ENCODE measurements at regions of chrX and their contacts with region 1.

Region 1: DNA sequence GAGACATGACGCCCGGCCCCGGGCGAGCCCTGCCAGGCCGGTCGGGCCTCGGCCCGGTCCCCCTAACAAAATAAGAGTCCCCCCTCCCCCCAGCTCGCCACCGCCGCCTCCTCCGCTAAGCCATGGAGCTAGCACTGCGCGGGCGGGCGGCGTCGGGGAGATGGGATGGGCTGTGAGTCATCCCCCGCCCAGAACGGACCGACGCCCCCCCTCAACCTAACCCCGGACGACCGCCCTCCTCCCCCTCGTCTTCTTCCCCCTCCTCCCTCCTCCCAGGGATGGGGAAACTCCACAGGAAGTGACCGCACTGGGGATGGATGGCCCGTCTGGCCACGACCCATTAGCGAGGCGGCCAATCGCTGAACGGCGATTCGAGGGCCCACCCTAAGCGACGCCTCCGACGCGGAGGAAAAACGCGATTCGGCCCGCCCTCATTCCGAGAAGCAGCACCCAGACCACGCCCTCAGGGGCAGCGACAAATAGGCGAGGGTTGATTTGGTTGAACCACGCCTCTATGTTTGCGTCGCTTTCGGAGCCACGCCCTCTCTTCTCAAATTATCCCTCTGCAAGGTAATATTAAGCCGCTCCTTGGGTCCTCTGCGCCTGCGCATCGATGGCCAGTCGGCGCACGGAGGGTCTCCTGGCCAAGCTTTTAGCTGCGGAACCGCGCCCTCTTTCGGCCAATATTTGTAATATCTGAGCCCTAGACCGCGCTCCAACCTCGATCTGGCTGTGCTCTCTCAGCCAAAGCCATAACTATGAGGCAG is at the start of gene TFE3:
- DNase-seq: peak; percentile 91 to 99 (median 96)
- H3K4me3 ChIP-seq: peak within 1 kb of the TSS in 1 of 2 donors; percentile 63
- H3K4me3 Mint-ChIP-seq: peak within 1 kb of the TSS; percentile 84 to 94 (median 89)
- H3K27ac ChIP-seq: peak within 1 kb of the TSS; percentile 93
- H3K27ac Mint-ChIP-seq: peak within 1 kb of the TSS; percentile 93 to 97 (median 96)
- H3K4me1 ChIP-seq: peaks cover 39% of the 10 kb centered on the region
- H3K4me1 Mint-ChIP-seq: peaks cover 18 to 47% (median 30%) of the 10 kb centered on the region in 4 donors
- H3K27me3 ChIP-seq: no peaks in the 10 kb centered on the region
- H3K27me3 Mint-ChIP-seq: no peaks in the 10 kb centered on the region
- total RNA-seq, gene TFE3: 35.5 to 37.6 TPM

Region 2: GRCh38 chrX:47264483-47265173 is 1778.8 kb before region 1 on chrX:
- CTCF ChIA-PET with region 1: no interaction called
- POLR2A ChIA-PET with region 1: no interaction called
- intact Hi-C with region 1: no loop called
- DNase-seq: no peak
- H3K4me3 ChIP-seq: no peak overlapping the region
- H3K4me3 Mint-ChIP-seq: no peak overlapping the region
- H3K27ac ChIP-seq: no peak overlapping the region
- H3K27ac Mint-ChIP-seq: no peak overlapping the region
- H3K4me1 ChIP-seq: no peaks in the 10 kb centered on the region
- H3K4me1 Mint-ChIP-seq: no peaks in the 10 kb centered on the region
- H3K27me3 ChIP-seq: no peaks in the 10 kb centered on the region
- H3K27me3 Mint-ChIP-seq: no peaks in the 10 kb centered on the region

Region 3: DNA sequence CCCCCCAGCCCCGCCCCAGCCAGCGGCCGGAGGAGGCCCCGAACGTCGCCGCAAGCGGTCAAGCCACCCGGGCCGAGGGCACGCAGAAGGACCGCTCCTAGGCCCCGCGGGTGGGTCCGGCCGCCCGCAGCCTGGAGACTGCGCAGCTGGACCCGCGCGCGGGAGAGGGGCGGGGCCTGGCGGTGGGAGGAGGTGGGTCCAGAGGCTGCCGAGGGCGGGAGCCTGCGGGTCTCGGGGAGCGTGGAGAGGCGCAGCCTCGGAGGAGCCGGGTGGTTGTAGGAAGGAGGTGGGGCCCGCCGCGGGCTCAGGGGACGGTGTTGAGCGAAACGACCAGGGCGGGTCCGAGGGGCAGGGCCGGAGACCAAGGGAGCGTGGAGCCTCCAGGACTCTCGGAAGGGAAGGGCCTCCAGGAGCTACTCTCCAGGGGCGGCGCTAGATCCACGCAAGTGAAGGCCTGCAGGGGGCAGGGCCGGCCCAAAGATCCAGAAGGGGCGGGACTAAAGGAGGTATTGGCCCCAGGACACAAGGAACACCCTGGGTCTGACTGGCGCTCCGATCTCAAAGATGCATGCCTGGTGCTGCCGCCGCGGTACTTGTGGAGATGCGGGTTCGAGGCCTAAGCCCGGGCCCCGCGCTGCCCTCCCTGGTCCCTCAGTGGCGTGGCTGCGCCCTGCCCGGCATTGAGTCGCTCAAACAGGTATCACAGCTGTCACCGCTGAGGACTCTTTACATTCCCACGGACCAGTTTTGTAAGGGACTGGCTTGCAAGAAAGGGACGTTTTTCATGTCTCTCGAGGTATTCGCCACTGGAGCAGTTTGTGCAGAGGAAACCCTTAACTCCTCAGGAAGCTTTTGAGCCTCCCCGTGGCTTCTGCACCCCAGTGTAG is 151.8 kb before region 1 on chrX:
- CTCF ChIA-PET with region 1: interaction called, 4 read pairs
- POLR2A ChIA-PET with region 1: interaction called, 4 read pairs
- intact Hi-C with region 1: loop called (anchors 1 kb)
- DNase-seq: peak; percentile 76 to 85 (median 78)
- H3K4me3 ChIP-seq: peak overlapping the region in 1 of 2 donors; percentile 49
- H3K4me3 Mint-ChIP-seq: peak overlapping the region; percentile 75 to 97 (median 82)
- H3K27ac ChIP-seq: peak overlapping the region; percentile 52
- H3K27ac Mint-ChIP-seq: peak overlapping the region in 6 of 7 donors; percentile 37 to 90 (median 74)
- H3K4me1 ChIP-seq: peaks cover 15% of the 10 kb centered on the region
- H3K4me1 Mint-ChIP-seq: peaks cover 10 to 30% (median 21%) of the 10 kb centered on the region in 4 donors
- H3K27me3 ChIP-seq: no peaks in the 10 kb centered on the region
- H3K27me3 Mint-ChIP-seq: peaks cover 0 to 1% of the 10 kb centered on the region in 2 donors

Region 4: GRCh38 chrX:48917139-48918001 is 126.0 kb before region 1 on chrX:
- CTCF ChIA-PET with region 1: no interaction called
- POLR2A ChIA-PET with region 1: interaction called, 9 read pairs
- intact Hi-C with region 1: loop called (anchors 1 kb)
- DNase-seq: peak; percentile 90 to 93 (median 92)
- H3K4me3 ChIP-seq: peak overlapping the region; percentile 91 to 98
- H3K4me3 Mint-ChIP-seq: peak overlapping the region; percentile 93 to 98 (median 96)
- H3K27ac ChIP-seq: peak overlapping the region; percentile 88
- H3K27ac Mint-ChIP-seq: peak overlapping the region; percentile 87 to 97 (median 95)
- H3K4me1 ChIP-seq: peaks cover 67% of the 10 kb centered on the region
- H3K4me1 Mint-ChIP-seq: peaks cover 27 to 85% (median 56%) of the 10 kb centered on the region in 4 donors
- H3K27me3 ChIP-seq: no peaks in the 10 kb centered on the region
- H3K27me3 Mint-ChIP-seq: no peaks in the 10 kb centered on the region

Region 5: GRCh38 chrX:49002091-49002935 is 41.1 kb before region 1 on chrX and contains the start of gene GRIPAP1:
- CTCF ChIA-PET with region 1: interaction called, 5 read pairs
- POLR2A ChIA-PET with region 1: interaction called, 20 read pairs
- intact Hi-C with region 1: loop called (anchors 1 kb)
- DNase-seq: peak; percentile 82 to 94 (median 86)
- H3K4me3 ChIP-seq: peak within 1 kb of the TSS; percentile 79 to 86
- H3K4me3 Mint-ChIP-seq: peak within 1 kb of the TSS; percentile 91 to 99 (median 97)
- H3K27ac ChIP-seq: peak within 1 kb of the TSS; percentile 97
- H3K27ac Mint-ChIP-seq: peak within 1 kb of the TSS; percentile 93 to 99 (median 98)
- H3K4me1 ChIP-seq: peaks cover 27% of the 10 kb centered on the region
- H3K4me1 Mint-ChIP-seq: peaks cover 17 to 36% (median 27%) of the 10 kb centered on the region in 4 donors
- H3K27me3 ChIP-seq: no peaks in the 10 kb centered on the region
- H3K27me3 Mint-ChIP-seq: no peaks in the 10 kb centered on the region
- total RNA-seq, gene GRIPAP1: 99.6 to 111 TPM

Region 6: GRCh38 chrX:49073601-49074571 is 30.5 kb after region 1 on chrX and contains the start of gene PRAF2:
- CTCF ChIA-PET with region 1: no interaction called
- POLR2A ChIA-PET with region 1: interaction called, 10 read pairs
- intact Hi-C with region 1: loop called (anchors 1 kb)
- DNase-seq: peak; percentile 85 to 93 (median 89)
- H3K4me3 ChIP-seq: peak within 1 kb of the TSS; percentile 36 to 60
- H3K4me3 Mint-ChIP-seq: peak within 1 kb of the TSS; percentile 75 to 86 (median 84)
- H3K27ac ChIP-seq: peak within 1 kb of the TSS; percentile 77
- H3K27ac Mint-ChIP-seq: peak within 1 kb of the TSS; percentile 83 to 93 (median 88)
- H3K4me1 ChIP-seq: peaks cover 20% of the 10 kb centered on the region
- H3K4me1 Mint-ChIP-seq: peaks cover 5 to 28% (median 17%) of the 10 kb centered on the region in 4 donors
- H3K27me3 ChIP-seq: no peaks in the 10 kb centered on the region
- H3K27me3 Mint-ChIP-seq: no peaks in the 10 kb centered on the region
- total RNA-seq, gene PRAF2: 25.4 to 28.9 TPM

Region 7: DNA sequence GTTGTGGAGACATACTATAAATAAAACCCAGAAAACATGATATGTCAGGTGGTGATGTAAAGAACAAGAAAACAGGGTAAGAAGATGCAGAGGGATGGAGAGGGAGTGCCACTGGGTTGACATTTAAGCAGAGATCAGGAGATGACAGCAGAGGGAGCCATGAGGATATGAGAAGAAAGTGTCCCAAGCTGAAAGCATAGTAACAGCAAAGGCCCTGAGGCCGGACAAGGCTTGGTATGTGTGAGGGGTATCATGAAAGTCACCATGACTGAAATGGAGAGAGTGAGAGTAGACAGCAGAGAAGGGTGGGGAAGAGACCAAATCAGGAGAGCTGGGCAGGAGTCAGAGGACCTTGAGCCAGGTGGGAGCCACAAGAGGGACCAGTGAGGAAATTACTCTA is 76.7 kb after region 1 on chrX:
- CTCF ChIA-PET with region 1: no interaction called
- POLR2A ChIA-PET with region 1: no interaction called
- intact Hi-C with region 1: loop called (anchors 5 kb)
- DNase-seq: no peak
- H3K4me3 ChIP-seq: no peak overlapping the region
- H3K4me3 Mint-ChIP-seq: peak overlapping the region in 2 of 8 donors; percentile 25 to 73
- H3K27ac ChIP-seq: no peak overlapping the region
- H3K27ac Mint-ChIP-seq: no peak overlapping the region
- H3K4me1 ChIP-seq: peaks cover 34% of the 10 kb centered on the region
- H3K4me1 Mint-ChIP-seq: peaks cover 23 to 50% (median 33%) of the 10 kb centered on the region in 4 donors
- H3K27me3 ChIP-seq: no peaks in the 10 kb centered on the region
- H3K27me3 Mint-ChIP-seq: no peaks in the 10 kb centered on the region

Measured in CD4-positive, alpha-beta memory T cell (primary cell).